Ascending aorta (tissue), 2 donors: ENCODE measurements at regions of chr4 and their contacts with region 1.

Region 1: GRCh38 chr4:39458505-39459300 is at the starts of genes LIAS and RPL9:
- DNase-seq: peak; percentile 90 to 98
- H3K4me3 ChIP-seq: peak within 1 kb of the TSS; percentile 82 to 96
- H3K27ac ChIP-seq: peak within 1 kb of the TSS; percentile 96 to 98
- H3K4me1 ChIP-seq: peaks cover 2 to 16% of the 10 kb centered on the region in 2 donors
- H3K27me3 ChIP-seq: no peaks in the 10 kb centered on the region
- CTCF ChIP-seq: peak in 1 of 3 experiments; percentile 24
- total RNA-seq, gene LIAS: 2.9 TPM
- total RNA-seq, gene RPL9: 1,701 TPM

Region 2: GRCh38 chr4:38503689-38504395 is 954.9 kb before region 1 on chr4:
- intact Hi-C with region 1: no loop called
- DNase-seq: no peak
- H3K4me3 ChIP-seq: no peak overlapping the region
- H3K27ac ChIP-seq: no peak overlapping the region
- H3K4me1 ChIP-seq: no peaks in the 10 kb centered on the region
- H3K27me3 ChIP-seq: no peaks in the 10 kb centered on the region
- CTCF ChIP-seq: no peak

Region 3: GRCh38 chr4:39427520-39428114 is 31.1 kb before region 1 on chr4:
- intact Hi-C with region 1: no loop called
- DNase-seq: no peak
- H3K4me3 ChIP-seq: no peak overlapping the region
- H3K27ac ChIP-seq: no peak overlapping the region
- H3K4me1 ChIP-seq: no peaks in the 10 kb centered on the region
- H3K27me3 ChIP-seq: no peaks in the 10 kb centered on the region
- CTCF ChIP-seq: no peak

Region 4: DNA sequence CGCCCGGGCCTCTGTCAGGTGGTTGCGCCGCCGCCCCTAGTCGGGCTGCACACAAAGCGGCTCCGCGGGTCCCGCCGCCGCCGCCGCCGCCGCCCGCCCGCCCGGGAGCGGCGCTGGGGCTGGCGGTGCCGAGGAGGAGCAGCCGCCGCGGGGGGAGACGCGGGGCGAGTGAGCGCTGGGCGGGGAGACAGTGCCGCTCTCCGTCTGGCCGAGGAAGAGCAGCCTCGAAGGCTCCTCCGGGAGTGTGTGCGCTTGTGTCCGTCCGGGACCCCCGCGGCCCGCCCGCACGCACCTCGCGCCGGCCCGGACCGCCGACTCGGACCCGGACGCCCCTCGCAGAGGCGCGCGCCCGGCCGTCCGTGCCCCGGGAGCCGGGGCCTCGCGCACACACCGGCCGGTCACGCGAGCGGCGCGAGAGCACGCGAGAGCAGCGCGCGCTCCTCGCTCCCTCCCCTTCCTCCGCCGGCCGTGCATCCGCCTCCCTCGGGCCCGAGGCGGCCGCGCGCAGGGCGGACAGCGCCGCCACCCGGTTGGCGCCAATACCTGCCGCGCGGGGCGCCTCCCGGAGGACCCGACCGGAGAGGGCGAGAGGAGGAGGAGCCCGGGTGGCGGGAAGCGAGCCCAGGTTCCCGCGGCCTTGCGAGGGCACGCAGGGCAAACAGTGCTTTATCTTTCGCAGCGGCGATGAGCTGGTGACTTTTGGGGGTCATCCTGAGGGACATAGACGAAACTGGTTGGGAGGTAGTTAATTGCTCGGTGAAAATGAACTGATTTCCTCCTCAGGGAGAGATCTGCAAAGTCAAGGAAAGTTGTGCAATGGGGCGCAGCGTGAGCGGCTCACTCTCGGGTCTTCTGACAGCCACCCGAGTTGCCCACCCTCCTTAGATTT is 519.0 kb after region 1 on chr4 and contains the start of gene PDS5A:
- intact Hi-C with region 1: loop called (anchors 5 kb)
- DNase-seq: peak; percentile 44 to 93
- H3K4me3 ChIP-seq: peak within 1 kb of the TSS; percentile 98 to 99
- H3K27ac ChIP-seq: peak within 1 kb of the TSS; percentile 94 to 95
- H3K4me1 ChIP-seq: peaks cover 0 to 18% of the 10 kb centered on the region in 2 donors
- H3K27me3 ChIP-seq: no peaks in the 10 kb centered on the region
- CTCF ChIP-seq: peak; percentile 71 to 94 (median 83)
- total RNA-seq, gene PDS5A: 52.9 TPM